Spleen (tissue), 13 donors: ENCODE measurements at regions of chr22 and their contacts with region 1.

Region 1: DNA sequence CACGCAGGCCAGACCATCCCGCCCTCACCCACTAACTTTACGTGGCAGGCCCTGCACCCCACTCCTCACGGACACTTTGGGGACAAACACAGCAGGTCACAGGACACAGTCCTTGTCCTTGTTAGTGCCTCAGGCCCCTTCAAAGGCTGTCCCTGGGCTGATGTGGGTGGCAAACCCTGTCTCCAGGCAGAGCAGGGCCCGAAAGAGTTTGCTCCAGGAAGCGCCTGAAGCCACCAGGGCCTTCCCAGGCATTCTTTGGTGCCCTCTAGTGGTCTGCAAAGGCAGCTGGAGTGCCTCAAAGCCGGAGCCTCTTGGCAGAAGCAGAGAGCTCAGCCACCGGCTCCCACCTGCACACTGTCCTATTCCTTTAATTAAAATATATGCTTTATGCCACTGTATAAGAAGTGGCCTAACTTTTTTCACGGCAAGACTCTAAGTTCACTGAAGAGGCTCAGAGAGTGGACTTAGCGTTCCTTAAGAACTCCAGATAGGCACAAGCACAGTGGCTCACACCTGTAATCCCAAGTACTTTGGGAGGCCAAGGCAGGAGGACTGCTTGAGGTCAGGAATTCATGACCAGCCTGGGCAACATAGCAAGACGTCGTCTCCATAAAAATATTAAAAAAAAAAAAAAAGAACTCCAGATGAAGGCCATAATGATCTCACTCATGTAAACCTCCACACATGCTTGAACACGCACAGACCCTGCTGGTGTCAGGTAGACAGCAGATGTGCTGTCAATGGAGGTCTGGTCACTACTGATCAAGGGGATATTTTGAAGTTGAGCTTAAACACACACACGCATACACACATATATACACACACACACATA is 11.1 kb downstream of the TXN2 start:
- DNase-seq: peak; percentile 95
- H3K4me3 ChIP-seq: no peak overlapping the region
- H3K27ac ChIP-seq: peak overlapping the region; percentile 23 to 78 (median 64)
- H3K4me1 ChIP-seq: peaks cover 9 to 93% (median 55%) of the 10 kb centered on the region in 6 donors
- H3K27me3 ChIP-seq: no peaks in the 10 kb centered on the region
- CTCF ChIP-seq: peak; percentile 87 to 99 (median 96)
- POLR2A ChIP-seq: no peak

Region 2: DNA sequence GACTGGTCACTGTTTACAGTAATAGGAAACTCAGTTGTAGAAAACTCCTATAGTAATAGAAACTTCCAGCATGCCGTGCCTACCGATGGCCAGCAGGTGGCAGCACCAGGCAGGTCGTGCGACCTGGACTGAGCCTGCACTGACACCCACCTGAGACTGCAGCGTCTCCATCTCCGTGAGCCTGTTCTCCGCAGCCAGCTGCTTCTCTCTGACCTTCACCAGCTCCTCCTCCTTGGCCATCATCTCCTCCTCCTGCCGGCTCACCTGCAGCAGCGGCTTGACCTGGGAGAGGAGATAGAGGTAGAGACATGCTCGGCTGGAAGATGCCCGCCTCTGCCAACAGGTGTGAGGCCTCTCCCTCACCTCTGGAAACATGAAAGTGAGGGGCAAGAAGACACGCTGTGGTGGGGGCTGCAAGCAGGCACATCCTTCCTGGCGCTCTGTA is 169.0 kb before region 1 on chr22:
- intact Hi-C with region 1: loop called (anchors 5 kb)
- DNase-seq: peak; percentile 94
- H3K4me3 ChIP-seq: no peak overlapping the region
- H3K27ac ChIP-seq: peak overlapping the region in 6 of 8 donors; percentile 32 to 70 (median 65)
- H3K4me1 ChIP-seq: peaks cover 7 to 54% (median 24%) of the 10 kb centered on the region in 6 donors
- H3K27me3 ChIP-seq: no peaks in the 10 kb centered on the region
- CTCF ChIP-seq: peak; percentile 85 to 97 (median 93)
- POLR2A ChIP-seq: no peak

Region 3: GRCh38 chr22:36619797-36620399 is 149.5 kb after region 1 on chr22:
- intact Hi-C with region 1: no loop called
- DNase-seq: no peak
- H3K4me3 ChIP-seq: no peak overlapping the region
- H3K27ac ChIP-seq: no peak overlapping the region
- H3K4me1 ChIP-seq: no peaks in the 10 kb centered on the region
- H3K27me3 ChIP-seq: peaks cover 0 to 70% (median 6%) of the 10 kb centered on the region in 7 donors
- CTCF ChIP-seq: no peak
- POLR2A ChIP-seq: no peak